Vagina (tissue), 2 donors: ENCODE measurements at regions of chr16 and their contacts with region 1.

Region 1: GRCh38 chr16:78072275-78072702 is 27.2 kb upstream of the WWOX start:
- DNase-seq: no peak
- H3K4me3 ChIP-seq: no peak overlapping the region
- H3K27ac ChIP-seq: no peak overlapping the region
- H3K4me1 ChIP-seq: no peaks in the 10 kb centered on the region
- H3K27me3 ChIP-seq: no peaks in the 10 kb centered on the region
- CTCF ChIP-seq: no peak
- POLR2A ChIP-seq: no peak

Region 2: DNA sequence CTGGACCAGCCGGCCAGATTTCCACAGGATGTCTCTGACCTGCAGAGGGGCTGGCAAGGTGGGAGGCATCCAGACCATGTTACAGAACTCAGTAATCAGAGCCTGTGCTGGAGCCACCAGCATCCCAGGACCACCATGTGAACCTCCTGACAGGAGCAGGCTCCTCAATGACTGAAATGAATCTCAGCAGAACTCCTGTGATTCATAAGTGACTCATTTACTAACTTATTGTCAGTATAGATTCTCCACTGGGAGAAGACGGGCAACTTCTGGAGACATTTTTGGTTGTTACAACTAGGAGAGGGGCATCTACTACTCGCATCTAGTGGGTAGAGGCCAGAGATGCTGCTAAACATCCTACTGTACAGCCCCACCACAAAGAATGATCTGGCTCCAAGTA is 24.1 kb after region 1 on chr16:
- intact Hi-C with region 1: loop called (anchors 2 kb)
- DNase-seq: no peak
- H3K4me3 ChIP-seq: no peak overlapping the region
- H3K27ac ChIP-seq: no peak overlapping the region
- H3K4me1 ChIP-seq: peaks cover 15% of the 10 kb centered on the region
- H3K27me3 ChIP-seq: no peaks in the 10 kb centered on the region
- CTCF ChIP-seq: no peak
- POLR2A ChIP-seq: no peak